ENCODE measurements at regions of chr19 and their contacts with region 1.

Region 1: DNA sequence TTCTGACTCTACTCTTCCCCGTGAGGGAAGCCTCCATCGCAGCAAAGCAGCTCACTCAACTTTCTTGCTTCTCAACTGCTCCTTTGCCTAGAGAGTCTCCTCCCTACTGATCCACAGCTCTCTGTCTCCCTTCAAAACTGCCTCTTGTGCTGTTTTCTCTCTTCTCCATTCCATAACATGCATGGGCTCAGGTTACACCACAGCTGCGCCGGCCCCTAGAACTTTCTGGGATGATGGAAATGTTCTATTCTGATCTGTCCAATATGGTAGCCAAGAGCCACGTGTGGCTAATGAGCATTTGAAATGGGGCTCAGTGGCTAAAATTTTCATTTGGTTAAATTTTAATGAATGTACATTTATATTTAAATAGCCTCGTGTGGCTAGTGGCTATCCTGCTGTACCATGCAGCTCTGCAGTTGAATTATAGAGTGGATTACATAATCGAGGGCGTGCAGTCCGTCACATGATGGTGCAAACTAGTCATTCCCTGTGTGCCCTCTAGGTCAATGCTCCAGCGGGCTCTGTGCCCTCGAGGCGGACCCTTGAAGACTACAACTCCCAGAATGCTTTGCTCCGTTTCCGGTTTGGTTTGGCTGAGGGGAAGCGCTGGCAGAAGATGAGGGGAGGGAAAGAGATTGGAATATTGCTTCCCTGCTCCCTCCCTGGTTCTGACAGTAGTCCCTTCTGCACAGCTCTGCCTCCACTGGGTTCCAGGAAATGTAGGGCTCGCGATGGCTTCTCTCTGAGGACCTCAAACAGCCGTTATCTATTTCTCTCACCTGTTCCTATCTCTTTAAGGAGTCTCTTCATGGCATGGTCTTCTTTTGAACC is 109.8 kb downstream of the CACNA1A start:
- DNase-seq: peak; percentile 61
- H3K4me3 ChIP-seq: no peak overlapping the region
- H3K27ac ChIP-seq: no peak overlapping the region
- H3K4me1 ChIP-seq: peaks cover 43% of the 10 kb centered on the region
- H3K27me3 ChIP-seq: no peaks in the 10 kb centered on the region
- CTCF ChIP-seq: no peak

Region 2: GRCh38 chr19:12938234-12939025 is 458.0 kb before region 1 on chr19 and contains the start of gene CALR:
- CTCF ChIA-PET with region 1: no interaction called
- dilution Hi-C with region 1: no loop called
- in situ Hi-C with region 1: no loop called
- intact Hi-C with region 1: no loop called
- DNase-seq: peak; percentile 99
- H3K4me3 ChIP-seq: peak within 1 kb of the TSS; percentile 82 to 99 (median 98)
- H3K27ac ChIP-seq: peak within 1 kb of the TSS; percentile 78
- H3K4me1 ChIP-seq: peaks cover 29% of the 10 kb centered on the region
- H3K27me3 ChIP-seq: no peaks in the 10 kb centered on the region
- CTCF ChIP-seq: peak in 1 of 2 donors; percentile 35
- total RNA-seq, gene CALR: 1,117 to 1,135 TPM

Region 3: GRCh38 chr19:13334801-13335481 is 61.5 kb before region 1 on chr19:
- CTCF ChIA-PET with region 1: no interaction called
- dilution Hi-C with region 1: loop called (anchors 5 kb)
- in situ Hi-C with region 1: no loop called
- intact Hi-C with region 1: no loop called
- DNase-seq: no peak
- H3K4me3 ChIP-seq: no peak overlapping the region
- H3K27ac ChIP-seq: no peak overlapping the region
- H3K4me1 ChIP-seq: no peaks in the 10 kb centered on the region
- H3K27me3 ChIP-seq: no peaks in the 10 kb centered on the region
- CTCF ChIP-seq: no peak

Region 4: DNA sequence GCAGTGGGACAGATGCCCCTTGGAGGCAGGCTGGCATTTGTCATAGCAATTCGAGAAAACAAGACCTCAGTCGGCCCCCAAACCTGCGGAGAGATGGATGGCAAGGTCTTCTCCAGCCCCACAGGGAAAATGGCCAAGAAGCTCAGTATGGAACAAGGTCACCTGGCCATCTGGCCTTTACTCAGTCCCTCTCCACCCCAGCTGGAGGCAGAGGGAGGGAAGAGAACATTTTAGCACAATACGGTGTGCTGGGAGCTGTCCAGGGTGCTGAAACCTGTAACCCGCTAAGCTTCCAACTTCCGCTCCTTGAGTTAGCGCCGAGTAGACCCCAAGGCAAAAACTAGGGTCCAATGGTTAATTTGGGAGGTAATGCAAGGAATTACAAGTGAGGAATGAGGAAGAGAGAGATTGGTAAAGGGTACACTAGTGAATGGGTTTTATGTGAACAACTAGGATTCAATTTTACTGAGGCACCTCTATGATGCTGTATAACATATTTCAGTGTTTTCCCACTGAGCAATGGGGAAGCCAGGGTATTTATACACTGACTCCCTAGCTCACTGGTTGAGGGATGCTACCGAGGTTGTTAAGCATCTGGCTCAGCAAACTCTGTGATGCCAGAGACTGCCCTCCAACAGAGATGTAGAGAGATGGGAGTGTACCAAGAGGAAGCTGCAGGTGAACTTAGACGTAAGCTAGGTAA is 45.5 kb after region 1 on chr19:
- CTCF ChIA-PET with region 1: no interaction called
- dilution Hi-C with region 1: loop called (anchors 5 kb)
- in situ Hi-C with region 1: no loop called
- intact Hi-C with region 1: no loop called
- DNase-seq: peak; percentile 21
- H3K4me3 ChIP-seq: no peak overlapping the region
- H3K27ac ChIP-seq: no peak overlapping the region
- H3K4me1 ChIP-seq: no peaks in the 10 kb centered on the region
- H3K27me3 ChIP-seq: no peaks in the 10 kb centered on the region
- CTCF ChIP-seq: no peak

Region 5: DNA sequence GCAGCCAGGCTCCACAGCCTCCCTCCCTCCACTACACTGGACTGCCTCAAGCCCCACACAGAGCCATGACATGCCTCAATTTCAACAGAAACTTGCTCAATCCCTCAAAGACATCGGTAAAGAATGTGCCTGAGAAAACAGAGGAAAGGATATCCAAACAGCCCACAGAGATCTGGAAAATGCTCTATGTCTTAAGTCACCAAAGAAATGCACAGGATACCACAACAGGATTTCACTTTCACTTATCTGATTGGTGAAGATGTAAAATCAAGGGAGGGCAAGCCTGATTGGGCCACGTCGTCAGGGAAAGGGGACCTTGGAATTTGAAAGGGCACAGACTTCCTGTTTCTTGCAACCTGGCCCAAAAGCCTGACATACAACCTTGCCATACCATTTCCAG is 95.7 kb after region 1 on chr19:
- CTCF ChIA-PET with region 1: no interaction called
- dilution Hi-C with region 1: no loop called
- in situ Hi-C with region 1: no loop called
- intact Hi-C with region 1: no loop called
- DNase-seq: peak; percentile 35
- H3K4me3 ChIP-seq: no peak overlapping the region
- H3K27ac ChIP-seq: no peak overlapping the region
- H3K4me1 ChIP-seq: no peaks in the 10 kb centered on the region
- H3K27me3 ChIP-seq: no peaks in the 10 kb centered on the region
- CTCF ChIP-seq: no peak

Measured in mammary epithelial cell (primary cell).